SK-N-SH (cell line): ENCODE measurements at regions of chr16 and their contacts with region 1.

Region 1: DNA sequence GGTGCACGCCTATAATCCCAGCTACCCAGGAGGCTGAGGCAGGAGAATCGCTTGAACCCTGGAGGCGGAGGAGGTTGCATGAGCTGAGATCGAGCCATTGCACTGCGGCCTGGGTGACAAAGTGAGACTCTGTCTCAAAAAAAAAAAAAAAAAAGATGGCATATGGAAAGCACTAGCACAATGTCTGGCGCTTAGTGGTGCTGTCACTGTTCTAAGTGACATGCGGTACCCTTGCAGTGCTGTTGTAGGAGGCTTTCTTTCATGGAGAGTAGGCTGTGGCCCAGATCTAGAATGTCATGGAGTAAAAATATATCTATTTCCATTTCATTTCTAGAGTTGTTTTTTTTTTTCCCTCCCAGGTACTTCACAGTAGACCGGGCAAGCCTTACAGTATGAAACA is 14.6 kb upstream of the METTL9 start:
- DNase-seq: no peak
- H3K4me3 ChIP-seq: no peak overlapping the region
- H3K27ac ChIP-seq: no peak overlapping the region
- H3K4me1 ChIP-seq: no peaks in the 10 kb centered on the region
- H3K27me3 ChIP-seq: no peaks in the 10 kb centered on the region
- CTCF ChIP-seq: no peak
- EP300 ChIP-seq: no peak
- RAD21 ChIP-seq: no peak

Region 2: GRCh38 chr16:21156767-21157467 is 427.9 kb before region 1 on chr16:
- CTCF ChIA-PET with region 1: no interaction called
- POLR2A ChIA-PET with region 1: no interaction called
- DNase-seq: peak; percentile 85
- H3K4me3 ChIP-seq: no peak overlapping the region
- H3K27ac ChIP-seq: no peak overlapping the region
- H3K4me1 ChIP-seq: peaks cover 6 to 11% of the 10 kb centered on the region in 2 experiments; a peak in 3 of 4 replicates
- H3K27me3 ChIP-seq: no peaks in the 10 kb centered on the region
- CTCF ChIP-seq: peak; percentile 80
- EP300 ChIP-seq: no peak
- RAD21 ChIP-seq: peak; percentile 89

Region 3: GRCh38 chr16:21599233-21600030 is 14.6 kb after region 1 on chr16 and contains the start of gene METTL9:
- CTCF ChIA-PET with region 1: interaction called, 18 read pairs
- POLR2A ChIA-PET with region 1: no interaction called
- DNase-seq: peak; percentile 96
- H3K4me3 ChIP-seq: peak within 1 kb of the TSS; percentile 78 to 83
- H3K27ac ChIP-seq: peak within 1 kb of the TSS; percentile 86 to 93
- H3K4me1 ChIP-seq: peaks cover 4 to 12% of the 10 kb centered on the region in 2 experiments; a peak in 3 of 4 replicates
- H3K27me3 ChIP-seq: no peaks in the 10 kb centered on the region
- CTCF ChIP-seq: no peak
- EP300 ChIP-seq: peak; percentile 43 to 46; a peak in 2 of 4 replicates
- RAD21 ChIP-seq: peak; percentile 31; the same call in 1 of the 2 replicates
- polyA plus RNA-seq, gene METTL9: 70.7 and 82.9 TPM in 2 replicates

Region 4: GRCh38 chr16:21617607-21618006 is 32.8 kb after region 1 on chr16:
- CTCF ChIA-PET with region 1: no interaction called
- POLR2A ChIA-PET with region 1: no interaction called
- DNase-seq: no peak
- H3K4me3 ChIP-seq: no peak overlapping the region
- H3K27ac ChIP-seq: no peak overlapping the region
- H3K4me1 ChIP-seq: peaks cover 15 to 16% of the 10 kb centered on the region in 2 experiments
- H3K27me3 ChIP-seq: no peaks in the 10 kb centered on the region
- CTCF ChIP-seq: no peak
- EP300 ChIP-seq: no peak
- RAD21 ChIP-seq: no peak

Region 5: GRCh38 chr16:21646721-21647561 is 62.1 kb after region 1 on chr16:
- CTCF ChIA-PET with region 1: interaction called, 90 read pairs
- POLR2A ChIA-PET with region 1: no interaction called
- DNase-seq: no peak
- H3K4me3 ChIP-seq: no peak overlapping the region
- H3K27ac ChIP-seq: no peak overlapping the region
- H3K4me1 ChIP-seq: peaks cover 0 to 5% of the 10 kb centered on the region in 2 experiments; a peak in 3 of 4 replicates
- H3K27me3 ChIP-seq: no peaks in the 10 kb centered on the region
- CTCF ChIP-seq: no peak
- EP300 ChIP-seq: no peak
- RAD21 ChIP-seq: no peak